PC-9 (cell line): ENCODE measurements at regions of chr1 and their contacts with region 1.

Region 1: DNA sequence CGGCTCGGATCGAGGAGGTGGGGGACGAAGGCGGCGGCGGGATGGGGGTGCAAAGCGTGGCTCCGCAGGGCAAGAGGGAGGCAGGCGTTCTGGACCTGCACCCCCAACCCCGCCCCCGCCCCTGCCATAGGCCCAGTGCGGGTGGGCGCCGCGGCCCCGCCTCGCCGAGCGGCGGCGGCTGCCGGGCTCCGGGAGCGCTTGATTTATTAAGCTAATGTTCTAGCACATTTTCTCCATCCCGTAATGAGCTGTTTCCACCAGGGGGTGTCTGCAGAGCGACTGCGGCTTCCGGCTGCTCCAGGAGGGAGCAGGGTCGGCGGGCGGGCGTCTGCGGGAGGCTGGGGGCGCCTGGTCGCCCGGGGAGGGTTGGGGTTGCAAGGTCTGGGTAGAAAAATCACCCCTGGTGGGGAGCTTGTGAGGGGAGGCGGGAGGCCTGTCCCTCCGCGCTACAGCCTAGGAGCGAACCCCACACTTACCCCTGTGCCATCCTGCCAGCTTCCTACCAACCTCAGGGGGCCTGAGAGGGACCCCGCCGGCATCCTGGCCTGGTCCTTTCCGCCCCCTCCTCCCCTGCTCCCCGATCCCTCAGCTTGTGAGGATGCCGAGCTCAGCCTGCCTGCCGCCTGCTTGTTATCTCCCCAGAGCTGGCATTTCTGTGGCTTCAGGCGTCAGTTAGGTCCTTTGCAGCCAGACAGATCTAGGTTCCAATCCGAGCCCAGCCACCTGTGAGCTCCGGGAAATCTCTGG is 48.5 kb upstream of the ACOT11 start:
- DNase-seq: peak in 1 of 2 experiments; percentile 50
- H3K4me3 ChIP-seq: no peak overlapping the region; the same call in 1 of the 2 replicates
- H3K27ac ChIP-seq: no peak overlapping the region
- H3K4me1 ChIP-seq: no peaks in the 10 kb centered on the region; the same call in 1 of the 2 replicates
- H3K27me3 ChIP-seq: peaks cover 53% of the 10 kb centered on the region
- CTCF ChIP-seq: peak; percentile 35; the same call in 1 of the 2 replicates

Region 2: GRCh38 chr1:54571803-54572541 is 72.4 kb after region 1 on chr1:
- CTCF ChIA-PET with region 1: interaction called, 24 read pairs
- POLR2A ChIA-PET with region 1: no interaction called
- intact Hi-C with region 1: no loop called
- DNase-seq: no peak
- H3K4me3 ChIP-seq: no peak overlapping the region
- H3K27ac ChIP-seq: no peak overlapping the region
- H3K4me1 ChIP-seq: peaks cover 2% of the 10 kb centered on the region
- H3K27me3 ChIP-seq: no peaks in the 10 kb centered on the region
- CTCF ChIP-seq: no peak

Region 3: GRCh38 chr1:54581621-54582035 is 82.1 kb after region 1 on chr1:
- CTCF ChIA-PET with region 1: interaction called, 11 read pairs
- POLR2A ChIA-PET with region 1: no interaction called
- intact Hi-C with region 1: no loop called
- DNase-seq: peak; percentile 69 to 94
- H3K4me3 ChIP-seq: no peak overlapping the region
- H3K27ac ChIP-seq: no peak overlapping the region
- H3K4me1 ChIP-seq: no peaks in the 10 kb centered on the region
- H3K27me3 ChIP-seq: no peaks in the 10 kb centered on the region
- CTCF ChIP-seq: no peak